CD4-positive, alpha-beta memory T cell (primary cell): ENCODE measurements at regions of chr3 and their contacts with region 1.

Region 1: DNA sequence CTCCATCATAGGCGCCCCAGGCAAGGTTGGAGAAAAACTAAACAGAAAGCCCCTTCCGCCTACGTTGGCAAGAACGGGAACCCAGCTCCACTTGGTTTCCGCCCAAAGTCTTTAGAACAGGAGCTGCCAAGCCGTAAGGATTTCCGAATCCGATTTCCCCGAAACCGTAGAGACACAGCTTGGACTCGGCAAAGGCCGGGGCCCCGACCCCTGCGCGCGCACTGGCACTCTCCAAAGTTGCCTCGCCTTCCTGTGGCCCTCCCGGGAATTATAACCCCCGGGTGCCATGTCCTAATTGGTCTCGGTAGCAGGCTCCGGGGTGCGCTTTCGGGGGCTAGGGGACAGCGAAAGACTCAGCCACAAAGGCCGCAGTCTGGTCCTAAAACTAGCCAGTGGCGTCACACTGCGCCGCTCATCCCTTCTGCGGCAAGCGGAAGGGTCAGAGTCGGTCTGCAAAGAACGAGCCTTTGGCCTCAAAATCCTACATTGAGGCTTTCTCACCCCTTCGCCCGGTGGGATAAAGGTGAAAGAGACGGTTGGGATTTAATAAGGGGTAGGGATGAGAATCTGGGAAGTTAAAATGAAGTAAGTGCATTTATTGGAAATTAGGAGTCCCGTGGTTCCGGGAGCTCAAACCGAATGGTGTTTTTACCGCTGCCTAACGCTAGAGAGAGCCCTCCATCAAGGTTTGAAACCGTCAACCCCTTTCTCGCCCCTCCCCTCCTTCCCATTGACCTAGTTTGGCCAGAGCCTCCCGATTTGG is 6.8 kb downstream of the BCL6 start:
- DNase-seq: peak; percentile 65 to 78 (median 67)
- H3K4me3 ChIP-seq: peak overlapping the region; percentile 88 to 89
- H3K4me3 Mint-ChIP-seq: peak overlapping the region; percentile 95 to 99 (median 96)
- H3K27ac ChIP-seq: peak overlapping the region; percentile 73
- H3K27ac Mint-ChIP-seq: peak overlapping the region; percentile 77 to 99 (median 94)
- H3K4me1 ChIP-seq: peaks cover 34% of the 10 kb centered on the region
- H3K4me1 Mint-ChIP-seq: peaks cover 22 to 58% (median 36%) of the 10 kb centered on the region in 4 donors
- H3K27me3 ChIP-seq: no peaks in the 10 kb centered on the region
- H3K27me3 Mint-ChIP-seq: no peaks in the 10 kb centered on the region

Region 2: GRCh38 chr3:187919048-187919447 is 180.5 kb after region 1 on chr3:
- CTCF ChIA-PET with region 1: interaction called, 8 read pairs
- POLR2A ChIA-PET with region 1: no interaction called
- intact Hi-C with region 1: loop called (anchors 2 kb)
- DNase-seq: peak; percentile 52 to 78 (median 66)
- H3K4me3 ChIP-seq: peak overlapping the region; percentile 34 to 39
- H3K4me3 Mint-ChIP-seq: peak overlapping the region; percentile 81 to 88 (median 83)
- H3K27ac ChIP-seq: peak overlapping the region; percentile 46
- H3K27ac Mint-ChIP-seq: peak overlapping the region; percentile 89 to 94 (median 91)
- H3K4me1 ChIP-seq: peaks cover 38% of the 10 kb centered on the region
- H3K4me1 Mint-ChIP-seq: peaks cover 42 to 59% (median 50%) of the 10 kb centered on the region in 4 donors
- H3K27me3 ChIP-seq: no peaks in the 10 kb centered on the region
- H3K27me3 Mint-ChIP-seq: no peaks in the 10 kb centered on the region

Region 3: DNA sequence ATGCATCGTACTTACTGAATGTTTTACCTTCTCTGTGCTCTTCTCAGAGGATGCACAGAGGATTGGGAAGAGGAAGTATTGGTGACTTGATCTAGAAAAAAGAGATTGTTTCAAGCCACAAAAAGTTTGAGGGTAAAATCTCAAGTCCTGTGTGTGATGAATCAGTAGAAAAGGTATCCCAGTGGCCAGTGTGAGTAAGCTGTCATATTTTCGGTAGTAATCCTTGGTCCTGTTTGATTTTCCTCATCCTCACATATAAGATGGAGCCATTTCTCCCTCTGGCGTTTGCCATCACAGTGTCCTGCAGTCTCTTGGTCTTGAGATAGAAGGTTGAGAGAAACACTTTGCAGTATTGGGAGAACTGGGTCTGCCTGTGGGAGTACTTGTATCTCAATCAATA is 582.2 kb after region 1 on chr3:
- CTCF ChIA-PET with region 1: interaction called, 14 read pairs
- POLR2A ChIA-PET with region 1: no interaction called
- intact Hi-C with region 1: loop called (anchors 5 kb)
- DNase-seq: no peak
- H3K4me3 ChIP-seq: no peak overlapping the region
- H3K4me3 Mint-ChIP-seq: no peak overlapping the region
- H3K27ac ChIP-seq: no peak overlapping the region
- H3K27ac Mint-ChIP-seq: peak overlapping the region in 1 of 7 donors; percentile 25
- H3K4me1 ChIP-seq: peaks cover 32% of the 10 kb centered on the region
- H3K4me1 Mint-ChIP-seq: peaks cover 38 to 56% (median 42%) of the 10 kb centered on the region in 4 donors
- H3K27me3 ChIP-seq: no peaks in the 10 kb centered on the region
- H3K27me3 Mint-ChIP-seq: no peaks in the 10 kb centered on the region

Region 4: GRCh38 chr3:188749010-188749617 is 1010.6 kb after region 1 on chr3:
- CTCF ChIA-PET with region 1: interaction called, 218 read pairs
- POLR2A ChIA-PET with region 1: interaction called, 35 read pairs
- intact Hi-C with region 1: loop called (anchors 1 kb)
- DNase-seq: peak; percentile 55 to 63 (median 59)
- H3K4me3 ChIP-seq: no peak overlapping the region
- H3K4me3 Mint-ChIP-seq: no peak overlapping the region
- H3K27ac ChIP-seq: no peak overlapping the region
- H3K27ac Mint-ChIP-seq: no peak overlapping the region
- H3K4me1 ChIP-seq: no peaks in the 10 kb centered on the region
- H3K4me1 Mint-ChIP-seq: peaks cover 0 to 5% (median 0%) of the 10 kb centered on the region in 4 donors
- H3K27me3 ChIP-seq: no peaks in the 10 kb centered on the region
- H3K27me3 Mint-ChIP-seq: no peaks in the 10 kb centered on the region

Region 5: DNA sequence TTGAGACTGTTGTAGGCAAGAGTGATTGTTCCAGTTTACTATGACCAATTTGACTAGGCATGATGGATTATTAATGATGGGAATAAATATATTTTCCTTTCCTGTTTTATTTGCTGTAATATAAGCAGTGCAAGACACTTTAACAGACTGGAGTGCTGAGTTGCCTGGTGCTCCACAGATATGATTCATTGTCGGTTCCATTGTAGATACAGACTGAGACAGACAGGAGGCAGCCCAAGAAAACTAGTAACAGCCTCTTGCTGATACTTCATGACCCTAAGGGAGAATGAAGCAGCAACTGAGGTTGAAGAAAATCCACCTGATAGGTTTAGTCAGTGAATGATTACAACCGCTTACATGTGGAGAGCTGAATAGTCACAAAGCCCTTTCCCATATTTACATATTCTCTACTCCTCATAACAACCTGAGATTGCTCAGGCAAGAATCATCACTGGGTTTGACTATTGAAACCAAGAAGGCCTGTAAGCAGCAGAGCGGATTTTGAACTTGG is 1198.1 kb after region 1 on chr3:
- CTCF ChIA-PET with region 1: interaction called, 18 read pairs
- POLR2A ChIA-PET with region 1: no interaction called
- intact Hi-C with region 1: no loop called
- DNase-seq: no peak
- H3K4me3 ChIP-seq: no peak overlapping the region
- H3K4me3 Mint-ChIP-seq: no peak overlapping the region
- H3K27ac ChIP-seq: no peak overlapping the region
- H3K27ac Mint-ChIP-seq: no peak overlapping the region
- H3K4me1 ChIP-seq: no peaks in the 10 kb centered on the region
- H3K4me1 Mint-ChIP-seq: peaks cover 0 to under 1% (median 0%) of the 10 kb centered on the region in 4 donors
- H3K27me3 ChIP-seq: no peaks in the 10 kb centered on the region
- H3K27me3 Mint-ChIP-seq: no peaks in the 10 kb centered on the region

Region 6: GRCh38 chr3:189132231-189132707 is 1393.8 kb after region 1 on chr3:
- CTCF ChIA-PET with region 1: interaction called, 391 read pairs
- POLR2A ChIA-PET with region 1: interaction called, 48 read pairs
- intact Hi-C with region 1: loop called (anchors 1 kb)
- DNase-seq: peak; percentile 70 to 93 (median 77)
- H3K4me3 ChIP-seq: peak overlapping the region in 1 of 2 donors; percentile 5
- H3K4me3 Mint-ChIP-seq: peak overlapping the region; percentile 64 to 91 (median 78)
- H3K27ac ChIP-seq: peak overlapping the region; percentile 62
- H3K27ac Mint-ChIP-seq: peak overlapping the region; percentile 87 to 98 (median 94)
- H3K4me1 ChIP-seq: peaks cover 30% of the 10 kb centered on the region
- H3K4me1 Mint-ChIP-seq: peaks cover 25 to 51% (median 39%) of the 10 kb centered on the region in 4 donors
- H3K27me3 ChIP-seq: no peaks in the 10 kb centered on the region
- H3K27me3 Mint-ChIP-seq: no peaks in the 10 kb centered on the region